GM10248 (cell line): ENCODE measurements at regions of chr15 and their contacts with region 1.

Region 1: GRCh38 chr15:50145451-50145872 is 26.4 kb upstream of the ATP8B4 start:
- DNase-seq: no peak
- CTCF ChIP-seq: peak; percentile 42

Region 2: GRCh38 chr15:50134520-50135024 is 10.9 kb before region 1 on chr15:
- CTCF ChIA-PET with region 1: interaction called, 17 read pairs
- POLR2A ChIA-PET with region 1: no interaction called
- DNase-seq: no peak
- CTCF ChIP-seq: no peak

Region 3: DNA sequence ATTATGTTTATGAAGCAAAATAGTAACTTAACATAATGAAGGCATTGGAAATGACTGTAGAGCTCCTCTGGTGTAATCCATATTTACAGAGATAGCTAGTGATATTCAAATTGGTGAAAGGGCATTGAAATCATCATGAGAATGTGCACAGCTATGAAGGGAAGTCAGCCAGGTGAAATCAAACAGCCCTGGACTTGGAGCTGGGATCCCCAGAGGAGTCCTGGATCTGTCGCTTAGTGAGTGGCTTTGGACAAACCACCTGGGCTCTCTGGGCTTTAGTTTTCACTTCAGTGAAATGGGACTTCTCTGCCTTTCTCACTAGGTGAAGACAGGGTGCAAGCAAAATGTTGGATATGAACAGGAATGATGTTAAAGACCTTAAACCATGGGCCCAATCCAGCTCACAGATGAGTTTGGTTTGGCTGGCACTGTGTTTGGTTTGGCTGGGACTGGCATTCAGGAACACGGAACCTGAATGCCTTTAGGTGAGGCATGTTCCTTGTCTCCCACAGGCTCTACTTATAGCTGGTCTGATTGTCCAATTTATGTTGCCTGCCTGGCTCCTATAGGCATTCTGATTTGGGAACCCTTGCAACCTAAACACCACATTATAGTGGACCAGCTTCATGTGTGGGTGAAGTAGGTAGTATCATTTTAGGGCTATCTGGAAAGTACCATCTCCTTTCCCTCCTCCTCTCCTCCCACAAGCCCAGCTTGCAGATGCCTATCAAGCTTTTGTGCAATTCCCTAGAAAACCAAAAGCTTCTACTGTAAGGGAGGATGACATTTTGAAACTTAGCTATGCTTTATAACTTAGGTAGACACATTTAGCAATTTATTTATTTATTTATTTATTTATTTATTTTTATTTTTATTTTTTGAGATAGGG is 1059.9 kb after region 1 on chr15:
- CTCF ChIA-PET with region 1: no interaction called
- POLR2A ChIA-PET with region 1: no interaction called
- DNase-seq: no peak
- CTCF ChIP-seq: no peak